ENCODE measurements at regions of chr1 and their contacts with region 1.

Region 1: DNA sequence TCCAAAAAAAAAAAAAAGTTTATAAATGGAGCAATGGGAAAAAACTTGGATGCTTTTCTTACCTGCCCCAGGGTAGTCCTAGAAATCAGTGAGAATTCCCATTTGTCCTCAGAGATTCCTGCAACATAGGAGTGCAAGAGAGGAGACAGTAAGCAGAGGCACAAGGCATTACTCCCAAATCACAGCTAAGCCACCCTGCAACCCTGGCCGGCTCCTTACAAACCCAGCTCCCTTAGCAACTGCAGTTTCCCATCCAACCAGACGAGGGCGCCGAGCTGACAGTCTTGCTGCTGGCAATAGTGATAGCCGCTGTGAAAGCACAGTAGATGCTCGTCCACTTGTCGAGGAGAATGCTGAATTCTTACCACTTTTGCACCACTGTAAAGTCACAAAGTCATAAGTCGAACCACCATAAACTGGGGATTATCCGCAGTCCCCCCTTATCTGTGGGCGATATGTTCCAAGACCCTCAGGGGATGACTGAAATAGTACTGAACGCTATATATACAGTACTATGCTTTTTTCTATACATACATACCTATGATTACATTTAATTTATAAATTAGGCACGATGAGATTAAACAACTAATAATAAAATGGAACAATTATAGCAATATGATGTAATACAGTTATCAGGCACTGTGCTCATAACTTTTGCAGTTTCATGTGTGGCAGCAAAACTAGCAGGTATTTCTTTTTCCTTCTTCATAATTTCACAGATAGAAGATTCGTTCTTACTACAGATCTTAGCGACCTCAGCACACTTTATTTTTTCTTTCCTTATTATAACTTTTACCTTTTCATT is 6.0 kb upstream of the PITHD1 start:
- DNase-seq: peak; percentile 83

Region 2: GRCh38 chr1:23916209-23917131 is 144.2 kb after region 1 on chr1:
- CTCF ChIA-PET with region 1: interaction called, 13 read pairs
- POLR2A ChIA-PET with region 1: interaction called, 7 read pairs
- DNase-seq: peak; percentile 83